ENCODE measurements at regions of chr3 and their contacts with region 1.

Region 1: DNA sequence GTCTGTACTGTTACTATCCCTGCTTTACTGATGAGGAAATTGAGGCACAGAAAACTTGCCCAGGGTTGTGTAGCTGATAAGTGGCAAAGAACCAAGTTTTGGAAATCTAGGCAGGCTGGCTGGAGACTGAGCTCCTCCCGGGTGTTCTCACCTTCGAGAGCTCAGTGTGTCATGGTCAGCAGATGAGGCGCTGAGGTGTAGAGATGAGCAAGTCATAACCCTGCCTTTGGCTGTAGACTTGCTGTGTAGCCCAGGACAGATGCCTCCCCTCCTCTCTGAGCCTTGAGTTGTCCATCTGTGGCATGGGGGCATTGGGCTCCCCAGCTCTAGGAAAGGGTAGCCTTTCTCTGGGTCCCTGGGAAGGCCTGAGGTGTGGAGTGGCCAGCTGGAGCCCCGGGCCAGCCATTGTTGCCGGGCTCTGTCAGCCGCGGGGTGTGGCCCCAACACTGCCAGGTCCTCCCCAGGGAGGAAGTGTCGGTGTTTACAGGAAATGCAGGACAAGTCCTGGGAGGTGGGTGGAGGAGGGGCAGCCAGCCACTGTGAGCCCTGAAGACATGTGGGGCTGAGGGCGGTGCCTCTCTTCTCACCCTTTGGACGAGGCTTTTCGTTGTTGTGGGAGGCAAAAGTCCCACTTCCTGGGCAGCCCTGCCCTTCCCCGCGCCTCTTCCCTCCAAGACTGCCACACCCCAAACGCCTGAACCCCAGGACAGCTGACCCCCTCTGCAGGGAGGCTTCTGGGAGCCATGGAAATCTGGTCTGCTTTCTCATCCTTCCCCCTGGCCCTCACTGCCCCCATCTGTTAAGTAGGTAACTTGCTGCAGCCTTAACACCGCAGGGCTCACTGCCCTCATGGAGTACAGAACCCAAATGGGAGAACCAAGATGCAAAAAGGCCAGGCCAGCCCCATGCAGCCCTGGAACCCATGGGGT is 29.1 kb downstream of the FGD5 start:
- DNase-seq: peak; percentile 77 to 87 (median 79)
- ATAC-seq: peak; percentile 39 to 92 (median 82)
- H3K4me3 ChIP-seq: no peak overlapping the region
- H3K27ac ChIP-seq: peak overlapping the region; percentile 5 to 88 (median 62)
- H3K4me1 ChIP-seq: peaks cover 3 to 66% (median 43%) of the 10 kb centered on the region in 12 donors
- H3K27me3 ChIP-seq: peaks cover 0 to 19% (median 0%) of the 10 kb centered on the region in 9 donors
- CTCF ChIP-seq: no peak
- POLR2A ChIP-seq: no peak

Region 2: GRCh38 chr3:14791343-14791945 is 56.4 kb before region 1 on chr3:
- intact Hi-C with region 1: loop called in 1 of 10 experiments (anchors 10 kb)
- DNase-seq: peak; percentile 73 to 81 (median 75)
- ATAC-seq: peak; percentile 48 to 76 (median 69)
- H3K4me3 ChIP-seq: no peak overlapping the region
- H3K27ac ChIP-seq: no peak overlapping the region
- H3K4me1 ChIP-seq: peaks cover 0 to 39% (median 27%) of the 10 kb centered on the region in 12 donors
- H3K27me3 ChIP-seq: peaks cover 0 to 5% (median 0%) of the 10 kb centered on the region in 9 donors
- CTCF ChIP-seq: peak; percentile 59 to 83 (median 70)
- POLR2A ChIP-seq: no peak

Region 3: DNA sequence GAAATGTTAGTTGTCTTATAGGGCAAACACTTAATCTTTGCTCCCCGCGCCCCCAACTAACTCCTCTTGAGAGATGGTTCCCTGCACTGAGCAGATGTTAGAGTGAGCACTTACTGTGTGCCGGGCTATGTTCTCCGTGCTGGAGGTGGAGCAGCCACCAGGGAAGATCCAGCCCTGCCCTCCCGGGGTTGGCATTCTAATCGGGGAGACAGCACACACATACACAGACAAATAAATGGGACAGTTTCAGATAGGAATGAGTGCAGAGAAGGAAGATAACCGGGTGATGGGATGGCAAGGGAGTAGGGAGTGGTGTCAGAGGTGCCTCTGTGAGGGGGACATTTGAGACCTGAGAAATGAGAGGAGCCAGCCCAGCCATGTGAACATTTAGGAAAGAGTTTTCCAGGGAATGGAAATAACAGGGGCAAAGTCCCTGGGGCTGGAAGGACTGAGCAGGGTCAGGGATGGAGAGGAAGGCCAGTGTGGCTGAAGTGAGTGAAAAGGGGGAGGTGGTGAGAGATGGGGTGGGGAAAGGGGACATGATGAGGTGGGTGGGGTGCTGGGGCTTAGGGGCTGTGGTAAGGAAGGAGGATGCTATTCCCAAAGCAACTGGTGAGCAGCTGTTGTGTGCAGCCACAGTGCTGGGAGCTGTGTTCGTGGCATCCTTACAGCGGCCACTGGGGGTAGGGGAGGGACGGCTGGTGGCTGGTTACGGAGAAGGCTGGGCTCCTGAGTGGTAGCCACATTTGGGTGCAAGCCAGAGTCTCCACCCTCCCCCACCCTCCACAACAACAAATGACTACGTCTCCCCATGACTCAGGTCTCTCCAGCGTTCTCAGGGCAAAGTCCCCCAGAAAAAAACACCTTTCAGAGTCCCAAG is 44.5 kb before region 1 on chr3:
- intact Hi-C with region 1: loop called in 2 of 10 experiments (anchors 5 to 10 kb)
- DNase-seq: peak in 1 of 5 donors; percentile 59
- ATAC-seq: peak; percentile 57 to 64 (median 58)
- H3K4me3 ChIP-seq: no peak overlapping the region
- H3K27ac ChIP-seq: peak overlapping the region; percentile 14 to 90 (median 74)
- H3K4me1 ChIP-seq: peaks cover 3 to 45% (median 32%) of the 10 kb centered on the region in 12 donors
- H3K27me3 ChIP-seq: peaks cover 0 to 9% (median 0%) of the 10 kb centered on the region in 9 donors
- CTCF ChIP-seq: peak in 1 of 12 donors; percentile 9
- POLR2A ChIP-seq: no peak

Region 4: GRCh38 chr3:14810070-14810784 is 37.6 kb before region 1 on chr3:
- intact Hi-C with region 1: loop called in 3 of 10 experiments (anchors 5 kb)
- DNase-seq: peak; percentile 61 to 73 (median 65)
- ATAC-seq: peak; percentile 56 to 77 (median 69)
- H3K4me3 ChIP-seq: peak overlapping the region; percentile 56 to 95 (median 77)
- H3K27ac ChIP-seq: peak overlapping the region; percentile 79 to 97 (median 90)
- H3K4me1 ChIP-seq: peaks cover 3 to 67% (median 38%) of the 10 kb centered on the region in 12 donors
- H3K27me3 ChIP-seq: peaks cover 0 to 35% (median 11%) of the 10 kb centered on the region in 9 donors
- CTCF ChIP-seq: no peak
- POLR2A ChIP-seq: no peak

Region 5: DNA sequence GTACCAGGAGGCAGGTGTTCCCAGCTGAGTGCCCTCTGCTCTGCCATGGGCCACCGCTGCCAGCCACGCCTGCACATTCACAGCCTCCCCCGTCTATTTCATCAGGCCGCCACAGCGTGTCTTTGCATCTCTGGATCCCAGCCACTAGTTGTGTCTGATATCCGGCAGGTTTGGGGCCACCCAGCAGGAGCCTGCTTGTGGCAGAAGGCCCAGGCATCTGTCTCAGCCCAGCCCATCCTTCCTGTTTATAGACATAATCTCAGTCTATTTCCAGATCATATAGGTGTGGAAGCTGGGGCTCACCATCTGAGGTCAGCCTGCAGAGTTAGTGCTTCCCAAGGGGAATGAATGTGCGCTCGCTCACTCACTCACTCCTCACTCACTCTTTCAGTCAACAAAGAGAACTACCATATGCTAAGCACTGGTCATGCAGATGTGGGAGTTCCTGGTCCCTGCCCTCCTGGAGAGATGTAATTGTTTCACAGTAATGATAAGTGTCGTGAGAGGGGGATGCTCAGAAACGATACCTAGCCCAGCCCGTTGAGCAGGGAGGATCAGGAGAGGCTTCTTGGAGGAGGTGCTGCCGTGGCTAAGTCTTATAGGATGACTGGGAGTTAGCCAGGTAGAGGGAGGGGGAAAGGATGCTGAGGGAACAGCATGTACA is 31.5 kb after region 1 on chr3:
- intact Hi-C with region 1: loop called in 1 of 10 experiments (anchors 1 kb)
- DNase-seq: peak in 3 of 5 donors; percentile 44 to 65 (median 45)
- ATAC-seq: peak; percentile 49 to 66 (median 60)
- H3K4me3 ChIP-seq: no peak overlapping the region
- H3K27ac ChIP-seq: peak overlapping the region in 7 of 12 donors; percentile 1 to 39 (median 9)
- H3K4me1 ChIP-seq: peaks cover 0 to 54% (median 35%) of the 10 kb centered on the region in 12 donors
- H3K27me3 ChIP-seq: no peaks in the 10 kb centered on the region
- CTCF ChIP-seq: no peak
- POLR2A ChIP-seq: no peak

Region 6: GRCh38 chr3:14902719-14903118 is 54.8 kb after region 1 on chr3:
- intact Hi-C with region 1: loop called in 1 of 10 experiments (anchors 5 kb)
- DNase-seq: peak; percentile 76 to 87 (median 87)
- ATAC-seq: peak; percentile 87 to 96 (median 92)
- H3K4me3 ChIP-seq: no peak overlapping the region
- H3K27ac ChIP-seq: peak overlapping the region in 5 of 12 donors; percentile 25 to 47 (median 34)
- H3K4me1 ChIP-seq: peaks cover 0 to 27% (median 12%) of the 10 kb centered on the region in 12 donors
- H3K27me3 ChIP-seq: no peaks in the 10 kb centered on the region
- CTCF ChIP-seq: peak in 5 of 12 donors; percentile 13 to 41 (median 25)
- POLR2A ChIP-seq: no peak

Region 7: GRCh38 chr3:14921078-14921616 is 73.3 kb after region 1 on chr3:
- intact Hi-C with region 1: no loop called
- DNase-seq: peak; percentile 87 to 94 (median 87)
- ATAC-seq: peak; percentile 88 to 94 (median 94)
- H3K4me3 ChIP-seq: no peak overlapping the region
- H3K27ac ChIP-seq: no peak overlapping the region
- H3K4me1 ChIP-seq: peaks cover 0 to 10% (median 6%) of the 10 kb centered on the region in 12 donors
- H3K27me3 ChIP-seq: no peaks in the 10 kb centered on the region
- CTCF ChIP-seq: peak in 11 of 12 donors; percentile 96 to 99 (median 98)
- POLR2A ChIP-seq: no peak